Activated B cell treated with CpG ODN at 0.5 μM for 24 hours (primary cell): ENCODE measurements at regions of chr1 and their contacts with region 1.

Region 1: DNA sequence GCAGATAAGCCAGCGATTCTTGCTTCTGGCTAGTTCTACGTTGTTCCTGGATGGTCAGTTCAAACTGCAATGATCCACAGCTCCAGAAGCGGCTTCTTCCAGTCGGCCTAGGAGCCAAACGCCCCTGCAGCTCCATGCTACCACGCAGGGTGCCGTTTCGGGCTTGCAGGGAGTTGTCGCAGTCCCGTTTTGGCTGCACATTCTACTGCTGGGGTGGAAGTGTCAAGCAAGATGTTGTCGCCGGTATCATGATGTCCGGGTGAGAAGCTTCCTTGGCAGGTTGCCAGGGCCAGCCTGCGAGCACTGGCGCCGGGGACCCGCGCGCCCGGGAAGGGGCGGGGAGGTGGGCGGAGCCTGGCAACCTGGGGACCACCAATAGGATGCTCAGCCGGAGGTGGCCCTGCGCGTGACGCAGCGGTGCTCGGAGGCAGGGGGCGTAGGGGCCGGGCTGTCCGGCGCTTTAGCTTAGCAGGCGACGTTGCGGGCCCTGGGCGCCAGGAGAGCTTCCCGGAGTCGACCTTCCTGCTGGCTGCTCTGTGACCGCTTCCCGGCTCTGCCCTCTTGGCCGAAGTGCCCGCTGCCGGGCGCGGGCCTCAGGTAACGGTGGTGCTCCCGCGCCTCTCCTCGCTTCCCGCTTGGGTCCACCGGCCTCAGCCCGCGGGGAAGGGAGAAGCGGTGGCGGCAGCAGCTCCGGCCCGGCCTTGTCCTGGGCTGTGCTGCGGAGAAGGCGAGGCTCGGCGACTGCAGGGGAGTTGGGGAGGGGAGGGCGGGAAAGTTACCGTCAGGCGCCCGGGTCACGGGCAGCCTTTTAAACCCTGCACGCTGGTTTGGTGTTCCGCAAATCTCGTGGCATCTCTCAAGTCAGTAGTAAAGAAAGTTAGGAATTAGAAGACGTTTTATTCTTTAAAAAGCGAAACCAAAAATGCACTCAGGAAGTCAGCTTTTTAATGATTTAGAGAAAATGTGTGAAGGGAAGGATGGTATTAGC is at the start of gene SOAT1:
- DNase-seq: peak; percentile 92
- ATAC-seq: peak; percentile 99
- H3K4me3 Mint-ChIP-seq: peak within 1 kb of the TSS; percentile 97
- H3K27ac Mint-ChIP-seq: peak within 1 kb of the TSS; percentile 93
- H3K4me1 Mint-ChIP-seq: peaks cover 44% of the 10 kb centered on the region
- H3K27me3 Mint-ChIP-seq: no peaks in the 10 kb centered on the region
- CTCF ChIP-seq: no peak
- total RNA-seq, gene SOAT1: 17.3 and 20.0 TPM in 2 replicates

Region 2: DNA sequence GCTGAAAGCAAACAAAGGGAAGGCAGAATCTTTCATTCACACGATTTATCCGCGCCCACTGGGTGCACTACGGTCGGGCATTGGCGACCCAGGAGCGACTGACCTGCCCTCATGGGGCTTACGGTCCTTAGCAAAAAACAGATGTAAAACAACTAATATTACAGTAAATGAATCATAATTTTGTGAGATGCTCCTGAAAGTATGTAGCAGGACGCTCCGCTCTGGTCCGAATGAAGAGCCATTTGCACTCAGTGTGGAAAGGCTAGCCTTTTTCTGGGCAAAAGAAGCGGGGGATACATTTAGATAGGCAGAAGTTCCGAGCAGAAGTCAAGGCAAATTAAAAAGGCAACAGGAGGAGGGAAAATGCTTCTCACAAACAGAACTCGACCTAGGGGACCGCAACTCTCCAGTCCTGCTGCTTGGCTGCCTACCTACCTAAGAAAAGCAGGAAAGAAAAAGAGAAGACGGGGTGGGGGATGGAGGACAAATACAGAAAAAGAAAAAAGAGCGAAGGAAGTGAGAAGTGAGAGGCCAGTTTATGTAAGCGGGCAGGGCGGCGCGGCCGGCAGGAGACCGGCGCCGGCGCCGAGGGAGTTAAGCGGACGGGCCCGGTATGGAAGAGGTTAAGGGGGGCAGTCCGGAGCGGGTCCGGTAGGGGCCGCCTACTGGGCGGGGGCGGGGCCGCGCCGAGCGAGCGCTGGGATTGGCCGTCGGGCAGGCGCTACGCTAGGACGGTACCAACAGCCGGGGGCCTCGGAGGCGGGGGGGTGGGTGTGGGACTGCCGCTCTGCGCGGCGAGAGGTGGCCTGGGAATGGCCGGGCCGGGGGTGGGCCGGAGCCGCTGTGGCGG is 268.3 kb before region 1 on chr1 and contains the start of gene FAM20B:
- CTCF ChIA-PET with region 1: no interaction called
- POLR2A ChIA-PET with region 1: no interaction called
- intact Hi-C with region 1: loop called (anchors 2 kb)
- DNase-seq: peak; percentile 90
- ATAC-seq: peak; percentile 84
- H3K4me3 Mint-ChIP-seq: peak within 1 kb of the TSS; percentile 90
- H3K27ac Mint-ChIP-seq: peak within 1 kb of the TSS; percentile 90
- H3K4me1 Mint-ChIP-seq: peaks cover 43% of the 10 kb centered on the region
- H3K27me3 Mint-ChIP-seq: no peaks in the 10 kb centered on the region
- CTCF ChIP-seq: no peak
- total RNA-seq, gene FAM20B: 26.3 and 27.5 TPM in 2 replicates

Region 3: DNA sequence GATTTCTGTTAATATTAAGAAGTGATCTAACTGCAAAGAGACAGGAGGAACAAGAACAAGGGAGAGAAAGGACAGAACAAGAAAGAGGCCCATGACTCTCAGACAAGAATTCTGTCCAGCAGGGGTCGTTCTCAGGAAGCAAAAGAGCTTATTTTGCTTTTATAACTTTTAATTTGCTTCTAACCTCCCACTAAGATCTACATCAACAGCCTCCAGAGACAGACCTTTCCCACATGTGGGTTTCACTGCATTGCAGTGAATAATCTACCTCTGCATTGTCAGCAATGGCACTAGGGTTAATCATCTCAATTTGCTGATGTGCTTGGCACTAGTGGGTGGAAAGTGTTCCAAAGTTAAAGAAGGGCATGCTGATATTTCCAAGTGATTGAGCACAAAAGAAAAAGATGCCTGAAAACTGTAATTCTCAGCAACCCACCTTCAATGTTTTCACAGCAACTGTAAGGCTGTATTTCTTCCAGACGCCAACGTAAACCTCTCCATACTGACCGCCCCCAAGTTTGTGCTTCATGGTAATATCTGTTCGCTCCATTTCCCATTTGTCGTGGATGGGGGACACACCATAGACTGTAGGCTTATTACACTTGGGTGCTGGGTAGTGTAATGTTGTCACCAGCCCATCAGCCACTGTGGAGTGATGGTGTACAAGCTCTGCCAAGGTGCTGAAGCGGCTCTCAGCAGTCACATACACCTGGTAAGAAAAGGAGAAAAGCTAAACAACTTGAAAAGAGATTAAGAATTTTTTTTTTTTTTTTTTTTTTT is 172.3 kb before region 1 on chr1:
- CTCF ChIA-PET with region 1: interaction called, 5 read pairs
- POLR2A ChIA-PET with region 1: interaction called, 3 read pairs
- intact Hi-C with region 1: loop called (anchors 1 kb)
- DNase-seq: no peak
- ATAC-seq: peak; percentile 47
- H3K4me3 Mint-ChIP-seq: no peak overlapping the region
- H3K27ac Mint-ChIP-seq: no peak overlapping the region
- H3K4me1 Mint-ChIP-seq: peaks cover 8% of the 10 kb centered on the region
- H3K27me3 Mint-ChIP-seq: no peaks in the 10 kb centered on the region
- CTCF ChIP-seq: peak; percentile 66

Region 4: DNA sequence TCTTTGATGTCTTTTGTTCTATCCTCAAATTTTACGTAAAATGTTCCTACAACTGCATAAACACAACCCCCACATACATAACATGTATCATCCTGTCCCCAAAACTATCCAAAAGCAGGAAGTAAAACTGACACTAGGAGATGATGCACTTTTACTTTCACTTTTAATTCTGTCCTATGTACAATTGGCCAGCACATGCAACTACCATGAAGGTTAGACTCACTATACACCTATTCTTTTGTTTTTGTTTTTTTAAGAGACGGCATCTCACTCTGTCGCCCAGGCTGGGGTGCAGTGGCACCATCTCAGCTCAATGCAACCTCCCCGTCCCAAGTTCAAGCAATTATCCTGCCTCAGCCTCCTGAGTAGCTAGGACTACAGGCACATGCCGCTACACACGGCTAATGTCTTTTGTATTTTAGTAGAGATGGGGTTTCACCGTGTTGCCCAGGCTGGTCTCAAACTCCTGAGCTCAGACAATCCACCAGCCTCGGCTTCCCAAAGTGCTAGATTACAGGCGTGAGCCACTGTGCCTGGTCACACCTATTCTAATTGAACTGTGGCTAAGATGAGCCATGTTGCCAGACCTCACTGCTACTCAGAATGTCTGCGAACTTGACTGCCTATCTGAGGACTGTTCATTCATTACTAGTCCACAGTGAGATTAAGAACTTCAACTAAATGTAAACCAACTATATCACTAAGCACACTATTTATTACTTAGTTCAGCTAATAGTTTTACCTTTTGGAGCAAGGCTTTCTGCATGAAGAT is 163.7 kb before region 1 on chr1:
- CTCF ChIA-PET with region 1: no interaction called
- POLR2A ChIA-PET with region 1: interaction called, 3 read pairs
- intact Hi-C with region 1: loop called (anchors 1 kb)
- DNase-seq: no peak
- ATAC-seq: peak; percentile 99
- H3K4me3 Mint-ChIP-seq: peak overlapping the region; percentile 45
- H3K27ac Mint-ChIP-seq: peak overlapping the region; percentile 79
- H3K4me1 Mint-ChIP-seq: peaks cover 13% of the 10 kb centered on the region
- H3K27me3 Mint-ChIP-seq: no peaks in the 10 kb centered on the region
- CTCF ChIP-seq: no peak

Region 5: GRCh38 chr1:179194068-179194537 is 99.5 kb before region 1 on chr1:
- CTCF ChIA-PET with region 1: no interaction called
- POLR2A ChIA-PET with region 1: no interaction called
- intact Hi-C with region 1: no loop called
- DNase-seq: no peak
- ATAC-seq: no peak
- H3K4me3 Mint-ChIP-seq: no peak overlapping the region
- H3K27ac Mint-ChIP-seq: no peak overlapping the region
- H3K4me1 Mint-ChIP-seq: peaks cover 11% of the 10 kb centered on the region
- H3K27me3 Mint-ChIP-seq: no peaks in the 10 kb centered on the region
- CTCF ChIP-seq: no peak

Region 6: DNA sequence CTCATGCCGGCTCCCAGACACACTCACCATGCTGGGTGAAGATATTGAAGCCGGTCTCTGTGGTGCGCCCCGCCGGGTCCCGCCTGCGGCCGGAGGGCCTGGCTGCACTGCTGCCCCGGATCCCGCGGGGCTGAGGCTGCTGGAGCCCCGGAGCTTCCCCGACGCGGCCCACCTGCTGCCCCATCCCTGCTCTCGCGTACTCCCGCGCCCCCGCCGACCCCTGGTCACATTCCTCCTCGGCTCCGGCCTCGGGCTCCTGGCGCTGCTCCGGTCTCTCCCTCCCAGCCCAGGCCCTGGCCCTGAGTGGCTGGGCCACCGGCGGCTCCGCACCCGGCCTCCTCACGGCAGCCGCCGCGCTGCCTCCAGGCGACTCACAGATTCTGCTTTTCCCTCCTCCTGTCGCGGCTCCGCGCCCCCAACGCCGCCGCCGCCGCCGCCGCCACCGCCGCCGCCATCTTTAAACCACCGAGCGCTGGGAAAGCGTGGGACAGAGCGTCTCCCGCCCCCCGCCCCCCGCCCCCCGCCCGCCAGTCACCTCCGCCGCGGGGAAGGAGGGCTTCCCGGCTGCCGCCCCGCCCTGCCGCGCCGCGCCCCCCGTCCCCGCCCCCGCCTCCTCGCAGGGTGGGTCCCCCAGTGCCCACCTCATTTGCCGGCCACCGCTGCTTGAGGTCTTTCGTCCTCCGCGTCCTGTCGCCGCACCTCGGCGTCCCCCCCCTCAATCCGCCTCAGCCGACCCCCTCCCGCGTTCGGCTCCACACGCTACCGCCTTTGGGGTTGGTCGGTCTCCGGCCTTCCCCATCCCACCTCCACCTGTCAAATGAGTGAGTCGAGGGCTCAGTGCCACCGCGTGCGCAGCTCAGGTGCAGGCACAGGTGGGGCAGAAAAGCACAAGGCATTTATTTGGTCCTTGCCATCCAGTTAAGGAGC is 64.2 kb before region 1 on chr1 and contains the start of gene ABL2:
- CTCF ChIA-PET with region 1: no interaction called
- POLR2A ChIA-PET with region 1: interaction called, 4 read pairs
- intact Hi-C with region 1: loop called (anchors 2 kb)
- DNase-seq: peak; percentile 49
- ATAC-seq: peak; percentile 72
- H3K4me3 Mint-ChIP-seq: peak within 1 kb of the TSS; percentile 95
- H3K27ac Mint-ChIP-seq: peak within 1 kb of the TSS; percentile 78
- H3K4me1 Mint-ChIP-seq: peaks cover 23% of the 10 kb centered on the region
- H3K27me3 Mint-ChIP-seq: no peaks in the 10 kb centered on the region
- CTCF ChIP-seq: no peak
- total RNA-seq, gene ABL2: 15.2 and 15.6 TPM in 2 replicates

Region 7: DNA sequence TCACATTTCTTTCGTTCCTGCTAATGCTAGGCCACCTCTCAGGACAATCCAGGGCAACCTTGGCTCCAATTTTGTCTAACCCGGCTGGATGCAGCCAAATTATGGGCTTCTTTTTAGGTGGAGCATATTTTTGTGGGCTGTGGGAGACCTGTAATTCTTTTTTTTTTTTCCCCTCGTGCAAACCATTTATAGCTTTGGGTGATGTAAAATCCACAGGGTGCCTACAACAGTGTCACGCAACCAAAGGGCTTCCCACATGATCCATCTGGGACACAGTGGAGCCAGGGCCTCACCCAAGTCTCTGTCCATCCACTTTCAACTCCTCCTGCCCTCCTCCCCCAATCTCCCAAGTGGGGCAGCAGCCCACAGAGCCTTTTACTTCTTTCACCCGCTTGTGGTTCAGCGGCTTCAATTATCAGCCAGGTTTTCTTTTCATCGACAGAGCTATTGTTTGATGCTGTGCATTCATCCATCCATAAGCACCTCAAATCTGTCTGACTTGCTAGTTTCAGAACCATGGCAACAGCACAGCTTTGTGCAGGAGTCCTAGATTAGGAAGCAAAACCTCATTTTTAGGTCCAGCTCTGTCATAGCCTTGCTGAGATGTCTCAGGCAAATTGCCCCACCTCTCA is 1255.2 kb after region 1 on chr1:
- CTCF ChIA-PET with region 1: no interaction called
- POLR2A ChIA-PET with region 1: no interaction called
- intact Hi-C with region 1: no loop called
- DNase-seq: no peak
- ATAC-seq: no peak
- H3K4me3 Mint-ChIP-seq: no peak overlapping the region
- H3K27ac Mint-ChIP-seq: no peak overlapping the region
- H3K4me1 Mint-ChIP-seq: no peaks in the 10 kb centered on the region
- H3K27me3 Mint-ChIP-seq: no peaks in the 10 kb centered on the region
- CTCF ChIP-seq: no peak